SK-N-SH (cell line): ENCODE measurements at regions of chr7 and their contacts with region 1.

Region 1: DNA sequence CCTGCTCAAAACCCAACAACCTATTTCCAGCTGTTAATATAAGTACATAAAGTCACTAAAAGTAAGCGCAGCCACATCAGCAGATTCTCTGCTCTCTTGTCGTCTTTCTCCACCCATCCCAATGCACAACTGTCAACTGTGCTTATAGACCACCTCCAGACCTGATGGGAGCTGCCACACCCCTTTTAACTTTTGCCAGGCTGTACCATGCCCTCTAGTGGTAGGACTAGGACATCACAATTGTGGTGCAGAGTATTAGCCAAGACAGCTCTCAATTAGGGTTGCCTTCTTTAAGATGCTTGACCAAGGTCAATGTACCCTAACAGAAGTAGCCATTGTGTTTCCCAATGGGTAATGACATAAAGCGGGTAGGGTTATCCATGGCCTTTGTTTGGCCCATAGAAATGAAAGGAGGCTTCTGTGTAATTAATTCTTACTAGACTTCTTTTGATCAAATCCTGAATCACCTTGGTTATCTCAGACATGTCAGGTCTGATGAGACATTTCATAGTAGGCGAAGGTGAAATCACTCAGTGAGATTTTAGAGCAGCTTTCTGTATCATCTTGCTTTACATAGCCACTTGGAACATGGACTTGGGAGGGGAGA is 68.1 kb downstream of the SCRN1 start:
- DNase-seq: peak; percentile 81
- H3K4me3 ChIP-seq: no peak overlapping the region; a peak in 1 of 4 replicates
- H3K27ac ChIP-seq: no peak overlapping the region
- H3K4me1 ChIP-seq: no peaks in the 10 kb centered on the region; a peak in 1 of 4 replicates
- H3K27me3 ChIP-seq: no peaks in the 10 kb centered on the region
- CTCF ChIP-seq: peak; percentile 99
- EP300 ChIP-seq: no peak
- RAD21 ChIP-seq: peak; percentile 99

Region 2: GRCh38 chr7:29636009-29636351 is 285.5 kb before region 1 on chr7:
- CTCF ChIA-PET with region 1: interaction called, 34 read pairs
- POLR2A ChIA-PET with region 1: no interaction called
- DNase-seq: no peak
- H3K4me3 ChIP-seq: no peak overlapping the region
- H3K27ac ChIP-seq: no peak overlapping the region
- H3K4me1 ChIP-seq: no peaks in the 10 kb centered on the region
- H3K27me3 ChIP-seq: no peaks in the 10 kb centered on the region
- CTCF ChIP-seq: peak; percentile 4; the same call in 1 of the 2 replicates
- EP300 ChIP-seq: no peak
- RAD21 ChIP-seq: no peak

Region 3: DNA sequence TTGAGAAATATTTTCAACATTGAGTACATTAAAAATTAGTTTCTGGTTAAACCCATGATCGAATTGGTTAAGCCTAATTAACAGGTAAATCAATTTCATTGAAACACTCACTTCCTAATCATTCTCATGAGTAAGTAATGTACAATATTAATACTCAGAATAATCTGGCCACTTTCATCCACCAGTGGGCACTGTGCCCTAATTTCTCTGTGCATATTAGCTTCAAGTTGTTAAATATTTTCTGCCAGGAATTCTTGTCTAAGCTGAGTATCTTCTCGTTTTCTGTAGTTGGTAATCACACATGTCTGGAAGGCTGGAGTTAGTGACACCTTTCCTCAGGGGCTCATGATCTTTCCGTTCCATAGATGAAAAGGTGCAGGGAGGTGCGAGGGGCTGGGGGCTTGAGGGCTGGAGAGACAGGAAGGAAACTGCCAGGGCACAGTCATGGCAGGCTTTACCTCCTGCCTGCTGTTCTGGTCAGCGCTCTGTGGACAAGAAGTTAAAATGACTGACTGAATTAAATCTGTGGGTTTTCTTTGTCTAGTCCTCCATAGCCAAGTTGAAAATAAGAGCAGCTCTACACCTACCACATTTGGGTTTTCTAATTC is 43.3 kb before region 1 on chr7:
- CTCF ChIA-PET with region 1: interaction called, 365 read pairs
- POLR2A ChIA-PET with region 1: interaction called, 4 read pairs
- DNase-seq: peak; percentile 79
- H3K4me3 ChIP-seq: no peak overlapping the region
- H3K27ac ChIP-seq: no peak overlapping the region
- H3K4me1 ChIP-seq: peaks cover 0 to 2% of the 10 kb centered on the region in 2 experiments; a peak in 1 of 4 replicates
- H3K27me3 ChIP-seq: no peaks in the 10 kb centered on the region
- CTCF ChIP-seq: peak; percentile 95
- EP300 ChIP-seq: no peak
- RAD21 ChIP-seq: peak; percentile 97

Region 4: DNA sequence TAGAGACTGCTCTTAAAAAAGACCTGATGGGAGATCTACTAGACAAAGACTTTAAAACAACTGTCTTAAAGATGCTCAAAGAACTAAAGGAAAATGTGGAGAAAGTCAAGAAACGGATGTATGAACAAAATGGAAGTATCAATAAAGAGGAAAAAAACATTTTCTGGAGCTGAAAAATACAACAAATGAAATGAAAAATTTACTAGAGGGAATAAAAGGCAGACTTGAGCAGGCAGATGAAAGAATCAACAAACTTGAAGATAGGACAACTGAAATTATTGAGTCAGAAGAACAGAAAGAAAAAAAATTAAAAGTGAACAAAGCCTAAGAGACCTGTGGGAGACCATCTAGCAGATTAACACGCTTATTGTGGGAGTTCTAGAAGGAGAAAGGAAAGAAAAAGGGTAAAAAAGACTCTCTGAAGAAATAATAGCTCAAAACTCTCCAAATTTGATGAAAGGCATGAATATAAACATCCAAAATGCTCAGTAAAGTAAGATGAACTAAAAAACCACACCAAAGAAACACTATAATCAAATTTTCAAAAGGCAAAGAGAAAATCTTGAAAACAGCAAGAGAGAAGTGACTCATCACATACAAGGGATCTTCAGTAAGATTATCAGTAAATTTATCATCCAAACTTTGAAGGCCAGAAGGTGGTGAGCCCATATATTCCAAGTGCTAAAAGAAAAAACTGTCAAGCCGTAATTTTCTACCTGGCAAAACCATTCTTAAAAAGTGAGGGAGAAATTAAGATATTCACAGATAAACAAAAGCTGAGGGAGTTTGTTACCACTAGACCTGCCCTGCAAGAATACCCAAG is 15.1 kb before region 1 on chr7:
- CTCF ChIA-PET with region 1: interaction called, 56 read pairs
- POLR2A ChIA-PET with region 1: no interaction called
- DNase-seq: no peak
- H3K4me3 ChIP-seq: no peak overlapping the region
- H3K27ac ChIP-seq: no peak overlapping the region
- H3K4me1 ChIP-seq: no peaks in the 10 kb centered on the region; a peak in 1 of 4 replicates
- H3K27me3 ChIP-seq: no peaks in the 10 kb centered on the region
- CTCF ChIP-seq: no peak
- EP300 ChIP-seq: no peak
- RAD21 ChIP-seq: no peak

Region 5: GRCh38 chr7:29946428-29947186 is 25.1 kb after region 1 on chr7:
- CTCF ChIA-PET with region 1: interaction called, 34 read pairs
- POLR2A ChIA-PET with region 1: no interaction called
- DNase-seq: peak; percentile 38
- H3K4me3 ChIP-seq: no peak overlapping the region
- H3K27ac ChIP-seq: no peak overlapping the region
- H3K4me1 ChIP-seq: no peaks in the 10 kb centered on the region
- H3K27me3 ChIP-seq: no peaks in the 10 kb centered on the region
- CTCF ChIP-seq: peak; percentile 54
- EP300 ChIP-seq: no peak
- RAD21 ChIP-seq: peak; percentile 48

Region 6: DNA sequence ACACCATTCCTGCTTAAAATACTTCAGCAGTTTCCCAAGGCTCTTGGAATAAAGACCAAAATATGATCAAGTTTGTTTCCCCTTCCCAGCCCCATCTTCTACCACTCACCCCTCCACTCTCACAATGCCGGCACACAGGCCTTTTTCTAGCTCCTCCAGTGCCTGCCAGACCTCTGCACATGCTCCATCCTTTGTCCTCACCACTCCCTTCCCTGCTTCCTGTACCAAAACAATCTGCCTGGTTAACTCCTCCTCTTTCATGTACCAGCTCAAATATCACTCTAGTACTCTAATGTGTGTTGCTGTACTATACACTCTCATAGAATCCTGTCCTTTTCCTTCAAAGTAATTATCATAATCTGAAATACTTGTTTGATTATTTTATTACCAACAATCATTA is 48.7 kb after region 1 on chr7:
- CTCF ChIA-PET with region 1: interaction called, 12 read pairs
- POLR2A ChIA-PET with region 1: no interaction called
- DNase-seq: no peak
- H3K4me3 ChIP-seq: no peak overlapping the region
- H3K27ac ChIP-seq: no peak overlapping the region
- H3K4me1 ChIP-seq: peaks cover 0 to 5% of the 10 kb centered on the region in 2 experiments; a peak in 2 of 4 replicates
- H3K27me3 ChIP-seq: no peaks in the 10 kb centered on the region
- CTCF ChIP-seq: no peak
- EP300 ChIP-seq: no peak
- RAD21 ChIP-seq: no peak

Region 7: GRCh38 chr7:30087371-30087770 is 165.9 kb after region 1 on chr7:
- CTCF ChIA-PET with region 1: no interaction called
- POLR2A ChIA-PET with region 1: no interaction called
- DNase-seq: no peak
- H3K4me3 ChIP-seq: no peak overlapping the region
- H3K27ac ChIP-seq: no peak overlapping the region
- H3K4me1 ChIP-seq: peaks cover under 1 to 8% of the 10 kb centered on the region in 2 experiments
- H3K27me3 ChIP-seq: no peaks in the 10 kb centered on the region
- CTCF ChIP-seq: no peak
- EP300 ChIP-seq: no peak
- RAD21 ChIP-seq: no peak